Activated CD4-positive, alpha-beta T cell treated with anti-CD3 and anti-CD28 coated beads for 36 hours (primary cell): ENCODE measurements at regions of chr12 and their contacts with region 1.

Region 1: DNA sequence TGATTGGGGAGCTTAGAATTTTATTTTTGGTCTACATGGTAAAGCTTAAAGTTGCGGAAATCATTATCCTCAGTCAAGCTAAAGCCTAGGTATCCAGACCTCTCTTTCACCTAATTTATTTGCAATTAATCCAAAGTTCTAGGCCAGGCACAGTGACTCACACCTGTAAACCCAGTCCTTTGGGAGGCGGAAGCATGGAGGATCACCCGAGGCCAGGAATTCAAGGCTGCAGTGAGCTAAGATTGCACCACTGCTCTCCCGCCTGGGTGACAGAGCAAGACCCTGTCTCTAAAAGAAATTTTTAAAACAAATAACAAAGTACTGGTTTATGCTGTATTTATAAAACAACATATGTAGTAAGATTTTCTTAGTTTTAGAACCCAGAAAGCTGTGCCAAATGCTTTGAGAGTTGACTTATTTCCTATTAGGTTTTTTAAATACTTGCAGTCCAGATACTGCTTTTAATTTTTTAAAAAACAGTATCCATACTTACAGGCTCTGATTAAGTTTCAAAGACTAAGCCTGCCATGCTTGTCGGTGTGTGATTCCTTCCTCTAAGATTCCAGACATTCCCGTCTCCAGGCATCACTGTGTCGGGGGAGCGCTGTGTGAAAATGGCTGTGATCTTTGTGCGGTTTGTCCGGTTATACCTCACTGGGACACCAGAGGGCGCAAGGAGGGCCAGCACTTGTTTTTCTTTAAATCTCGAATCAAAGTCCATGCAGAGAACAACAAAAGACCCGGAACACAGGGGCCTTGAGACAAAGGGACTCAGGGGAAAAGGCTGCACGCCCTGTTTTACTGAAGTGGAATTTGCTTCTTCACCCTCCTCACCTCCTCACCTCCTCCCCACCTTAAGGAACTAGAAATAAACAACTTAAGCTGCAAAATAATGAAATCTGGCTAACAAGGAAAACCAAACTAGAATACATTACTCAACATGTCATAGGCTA is 24.6 kb upstream of the TMPO start:
- DNase-seq: peak; percentile 88
- ATAC-seq: peak; percentile 85
- H3K4me3 Mint-ChIP-seq: peak overlapping the region; percentile 22
- H3K27ac Mint-ChIP-seq: peak overlapping the region; percentile 81
- H3K4me1 Mint-ChIP-seq: peaks cover 5% of the 10 kb centered on the region
- H3K27me3 Mint-ChIP-seq: no peaks in the 10 kb centered on the region

Region 2: GRCh38 chr12:98424726-98425401 is 65.9 kb before region 1 on chr12:
- CTCF ChIA-PET with region 1: no interaction called
- POLR2A ChIA-PET with region 1: no interaction called
- intact Hi-C with region 1: loop called in 1 of 2 experiments (anchors 2 kb)
- DNase-seq: peak; percentile 75
- ATAC-seq: peak; percentile 88
- H3K4me3 Mint-ChIP-seq: no peak overlapping the region
- H3K27ac Mint-ChIP-seq: no peak overlapping the region
- H3K4me1 Mint-ChIP-seq: no peaks in the 10 kb centered on the region
- H3K27me3 Mint-ChIP-seq: peaks cover 1% of the 10 kb centered on the region

Region 3: DNA sequence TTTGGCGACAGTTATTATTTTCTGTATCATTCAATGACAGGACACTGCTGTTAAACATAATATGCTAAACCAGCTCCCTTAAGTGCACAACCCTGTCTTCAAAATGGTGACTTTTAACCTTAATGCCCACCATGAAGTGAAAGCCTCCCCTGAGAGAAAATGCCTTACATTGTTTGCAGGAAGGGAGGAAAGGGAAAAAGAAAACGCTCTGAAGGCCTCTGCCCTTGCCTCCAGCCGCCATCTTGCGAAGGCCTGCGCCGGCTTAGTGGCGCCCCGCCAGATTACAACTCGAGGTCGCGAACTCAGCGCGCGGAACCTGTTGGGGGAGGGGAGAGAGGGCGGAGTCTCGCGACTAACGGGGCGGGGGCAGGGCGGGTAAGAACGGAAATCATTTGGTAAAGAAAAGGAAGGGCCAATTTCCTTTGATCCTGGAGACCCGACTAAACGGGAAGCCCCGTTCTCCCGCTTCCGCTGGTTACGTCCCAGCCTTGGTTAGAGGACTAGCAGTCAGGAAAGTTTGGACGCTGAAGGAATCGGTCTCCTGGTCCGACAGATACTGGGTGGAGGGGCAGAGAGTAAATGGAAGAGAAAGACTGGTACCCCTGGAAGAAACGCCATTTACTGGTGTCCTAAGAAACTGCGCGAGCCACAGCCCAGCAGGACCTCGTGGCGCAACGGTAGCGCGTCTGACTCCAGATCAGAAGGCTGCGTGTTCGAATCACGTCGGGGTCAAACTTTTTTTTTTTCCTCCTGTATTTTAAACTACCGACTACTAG is 13.0 kb after region 1 on chr12:
- CTCF ChIA-PET with region 1: interaction called, 37 read pairs
- POLR2A ChIA-PET with region 1: interaction called, 3 read pairs
- intact Hi-C with region 1: loop called (anchors 1 kb)
- DNase-seq: peak; percentile 98
- ATAC-seq: peak; percentile 85
- H3K4me3 Mint-ChIP-seq: peak overlapping the region; percentile 84
- H3K27ac Mint-ChIP-seq: peak overlapping the region; percentile 99
- H3K4me1 Mint-ChIP-seq: peaks cover 37% of the 10 kb centered on the region
- H3K27me3 Mint-ChIP-seq: peaks cover 2% of the 10 kb centered on the region

Region 4: GRCh38 chr12:98532681-98533304 is 42.0 kb after region 1 on chr12:
- CTCF ChIA-PET with region 1: interaction called, 53 read pairs
- POLR2A ChIA-PET with region 1: no interaction called
- intact Hi-C with region 1: loop called (anchors 5 kb)
- DNase-seq: no peak
- ATAC-seq: peak; percentile 61
- H3K4me3 Mint-ChIP-seq: no peak overlapping the region
- H3K27ac Mint-ChIP-seq: no peak overlapping the region
- H3K4me1 Mint-ChIP-seq: peaks cover 5% of the 10 kb centered on the region
- H3K27me3 Mint-ChIP-seq: no peaks in the 10 kb centered on the region

Region 5: DNA sequence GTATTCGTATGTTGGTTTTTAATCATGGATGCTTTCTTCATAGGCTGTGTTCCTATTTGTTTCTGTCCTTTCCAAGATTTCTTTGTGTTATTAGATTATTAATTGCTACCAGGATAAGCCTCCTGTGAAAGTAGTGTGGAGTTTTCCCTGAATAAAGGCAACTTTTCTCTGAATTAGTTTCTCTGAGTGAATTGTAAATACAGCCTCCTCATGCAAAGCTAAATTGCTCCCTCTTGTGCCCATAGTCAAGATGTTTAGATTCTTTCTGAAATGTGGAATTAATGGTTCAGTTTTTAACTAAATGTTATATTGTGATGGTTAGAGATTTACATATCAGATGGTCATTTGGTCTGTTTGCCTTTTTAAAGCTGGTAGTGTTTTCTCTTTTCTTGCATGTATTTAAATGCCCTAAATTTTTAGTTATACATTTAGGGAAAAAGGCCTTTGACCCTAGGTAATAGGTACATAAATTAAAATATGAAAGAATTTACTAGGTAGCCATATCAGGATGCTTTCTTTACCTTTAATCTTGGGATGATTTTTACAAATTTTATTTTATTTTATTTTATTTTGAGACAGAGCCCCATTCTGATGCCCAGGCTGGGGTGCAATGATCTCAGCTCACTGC is 163.2 kb after region 1 on chr12:
- CTCF ChIA-PET with region 1: no interaction called
- POLR2A ChIA-PET with region 1: no interaction called
- intact Hi-C with region 1: loop called in 1 of 2 experiments (anchors 1 kb)
- DNase-seq: no peak
- ATAC-seq: no peak
- H3K4me3 Mint-ChIP-seq: no peak overlapping the region
- H3K27ac Mint-ChIP-seq: no peak overlapping the region
- H3K4me1 Mint-ChIP-seq: peaks cover 18% of the 10 kb centered on the region
- H3K27me3 Mint-ChIP-seq: no peaks in the 10 kb centered on the region

Region 6: DNA sequence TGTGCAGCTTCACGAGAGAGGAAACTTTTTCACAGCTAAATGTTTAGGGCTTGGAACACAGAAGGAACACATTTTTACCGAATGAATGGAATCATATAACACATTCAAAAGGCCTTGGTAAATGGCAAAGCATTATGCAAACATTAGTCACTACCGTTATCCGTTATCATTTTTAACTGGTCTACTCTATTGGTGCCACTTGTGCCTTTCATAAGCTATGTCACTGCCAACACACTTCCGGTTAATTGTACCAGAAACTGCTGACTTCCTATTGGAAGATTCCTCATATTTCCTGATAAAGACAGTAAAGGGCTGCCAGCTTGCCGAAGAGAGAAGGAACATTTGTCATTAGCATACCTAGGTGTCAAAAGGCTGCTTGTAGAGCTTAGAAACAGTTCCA is 323.5 kb after region 1 on chr12:
- CTCF ChIA-PET with region 1: no interaction called
- POLR2A ChIA-PET with region 1: no interaction called
- intact Hi-C with region 1: no loop called
- DNase-seq: no peak
- ATAC-seq: no peak
- H3K4me3 Mint-ChIP-seq: no peak overlapping the region
- H3K27ac Mint-ChIP-seq: no peak overlapping the region
- H3K4me1 Mint-ChIP-seq: no peaks in the 10 kb centered on the region
- H3K27me3 Mint-ChIP-seq: peaks cover 22% of the 10 kb centered on the region